ENCODE measurements at regions of chr3 and their contacts with region 1.

Region 1: GRCh38 chr3:89098964-89099585 is 8.3 kb upstream of the EPHA3 start:
- DNase-seq: peak; percentile 87
- H3K4me3 ChIP-seq: no peak overlapping the region
- H3K27ac ChIP-seq: no peak overlapping the region
- H3K4me1 ChIP-seq: peaks cover 7% of the 10 kb centered on the region
- H3K27me3 ChIP-seq: no peaks in the 10 kb centered on the region
- CTCF ChIP-seq: peak; percentile 98

Region 2: DNA sequence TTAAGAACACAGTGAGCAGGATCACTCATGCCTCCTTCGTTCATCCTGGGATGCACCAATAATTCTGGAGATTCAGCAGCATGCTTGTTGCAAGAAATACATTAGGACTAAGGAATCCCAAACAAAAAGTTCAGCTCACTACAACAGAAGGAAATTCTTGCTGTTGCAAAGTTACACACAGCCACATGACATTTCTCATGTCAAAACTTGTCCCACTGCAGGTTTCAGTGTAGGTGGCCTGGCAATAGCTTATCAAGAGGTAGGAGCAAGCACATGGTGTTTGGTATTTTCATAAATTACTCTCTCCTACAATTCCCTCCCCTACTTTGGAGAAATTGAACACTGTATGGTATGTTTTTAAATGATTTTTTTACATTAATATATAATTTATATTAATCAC is 391.2 kb before region 1 on chr3:
- CTCF ChIA-PET with region 1: no interaction called
- POLR2A ChIA-PET with region 1: no interaction called
- intact Hi-C with region 1: loop called (anchors 5 kb)
- DNase-seq: no peak
- H3K4me3 ChIP-seq: no peak overlapping the region
- H3K27ac ChIP-seq: no peak overlapping the region
- H3K4me1 ChIP-seq: peaks cover 23% of the 10 kb centered on the region
- H3K27me3 ChIP-seq: no peaks in the 10 kb centered on the region
- CTCF ChIP-seq: no peak

Region 3: DNA sequence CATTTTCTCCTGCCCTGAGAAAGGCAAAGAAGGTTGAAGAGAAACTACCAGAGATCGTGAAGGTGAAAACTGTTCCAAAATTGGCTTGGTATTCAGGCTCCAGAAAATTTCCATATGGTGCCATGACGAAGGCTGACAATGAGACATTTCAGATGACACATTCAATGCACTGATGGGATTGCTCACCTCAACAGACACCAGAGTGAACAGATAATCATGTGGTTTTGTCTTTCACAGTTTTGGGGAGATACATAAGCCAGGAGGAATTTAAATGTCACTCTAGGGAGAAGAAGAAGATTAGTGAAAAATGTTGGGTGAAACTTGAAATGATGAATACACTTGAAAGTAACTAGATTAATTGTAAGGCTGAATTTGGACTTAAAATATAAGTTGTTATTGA is 331.3 kb before region 1 on chr3:
- CTCF ChIA-PET with region 1: no interaction called
- POLR2A ChIA-PET with region 1: no interaction called
- intact Hi-C with region 1: no loop called
- DNase-seq: no peak
- H3K4me3 ChIP-seq: no peak overlapping the region
- H3K27ac ChIP-seq: no peak overlapping the region
- H3K4me1 ChIP-seq: no peaks in the 10 kb centered on the region
- H3K27me3 ChIP-seq: no peaks in the 10 kb centered on the region
- CTCF ChIP-seq: no peak